Ascending aorta (tissue), 2 donors: ENCODE measurements at regions of chr6 and their contacts with region 1.

Region 1: GRCh38 chr6:169162752-169163591 is 90.7 kb downstream of the THBS2 start:
- DNase-seq: peak; percentile 65 to 94
- H3K4me3 ChIP-seq: peak overlapping the region; percentile 1 to 4
- H3K27ac ChIP-seq: peak overlapping the region; percentile 84 to 87
- H3K4me1 ChIP-seq: peaks cover 15 to 46% of the 10 kb centered on the region in 2 donors
- H3K27me3 ChIP-seq: no peaks in the 10 kb centered on the region
- CTCF ChIP-seq: no peak

Region 2: DNA sequence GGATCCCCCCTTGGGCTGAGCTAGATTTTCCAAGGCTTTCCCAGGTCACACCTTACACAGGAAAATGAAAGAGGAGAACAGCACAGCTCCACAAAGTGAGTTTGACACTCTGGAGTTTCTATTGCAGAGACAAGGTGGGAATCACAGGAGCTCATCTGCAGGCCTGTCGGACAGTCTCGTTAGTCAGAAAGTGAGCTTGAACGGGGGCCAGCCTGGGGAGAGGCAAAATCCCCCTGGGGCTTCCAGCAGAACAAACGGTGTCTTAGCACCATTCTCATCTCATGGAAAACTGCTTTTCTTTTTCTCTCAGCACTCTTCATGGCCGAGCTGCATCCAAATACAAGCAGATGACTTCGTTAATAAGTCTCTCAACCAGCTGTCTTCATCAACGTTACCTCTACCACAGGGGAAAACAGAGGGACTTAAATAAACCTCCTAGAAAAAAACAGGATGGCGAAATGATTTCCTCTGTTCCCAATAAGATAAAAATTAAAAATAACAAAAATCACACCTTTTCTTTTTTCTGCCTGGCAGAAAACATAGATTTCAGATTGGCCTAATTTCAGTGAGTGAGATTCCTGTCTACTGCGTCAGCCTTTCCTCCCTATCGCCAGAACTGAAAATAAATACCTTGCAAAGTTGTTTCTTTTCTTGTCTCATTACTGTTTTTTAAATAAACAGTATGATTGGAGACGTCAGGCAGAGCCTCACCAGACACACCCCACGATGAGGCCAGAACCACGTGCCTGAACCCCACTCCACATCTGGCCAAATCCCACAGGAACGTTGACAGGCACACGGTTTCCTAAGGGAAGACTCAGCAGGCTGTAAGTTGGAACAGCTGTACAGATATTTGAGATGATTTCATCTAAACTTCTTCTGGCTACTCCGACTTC is 1619.1 kb before region 1 on chr6:
- intact Hi-C with region 1: loop called (anchors 10 kb)
- DNase-seq: peak in 1 of 2 donors; percentile 77
- H3K4me3 ChIP-seq: no peak overlapping the region
- H3K27ac ChIP-seq: peak overlapping the region; percentile 81 to 85
- H3K4me1 ChIP-seq: peaks cover 10 to 24% of the 10 kb centered on the region in 2 donors
- H3K27me3 ChIP-seq: no peaks in the 10 kb centered on the region
- CTCF ChIP-seq: no peak

Region 3: DNA sequence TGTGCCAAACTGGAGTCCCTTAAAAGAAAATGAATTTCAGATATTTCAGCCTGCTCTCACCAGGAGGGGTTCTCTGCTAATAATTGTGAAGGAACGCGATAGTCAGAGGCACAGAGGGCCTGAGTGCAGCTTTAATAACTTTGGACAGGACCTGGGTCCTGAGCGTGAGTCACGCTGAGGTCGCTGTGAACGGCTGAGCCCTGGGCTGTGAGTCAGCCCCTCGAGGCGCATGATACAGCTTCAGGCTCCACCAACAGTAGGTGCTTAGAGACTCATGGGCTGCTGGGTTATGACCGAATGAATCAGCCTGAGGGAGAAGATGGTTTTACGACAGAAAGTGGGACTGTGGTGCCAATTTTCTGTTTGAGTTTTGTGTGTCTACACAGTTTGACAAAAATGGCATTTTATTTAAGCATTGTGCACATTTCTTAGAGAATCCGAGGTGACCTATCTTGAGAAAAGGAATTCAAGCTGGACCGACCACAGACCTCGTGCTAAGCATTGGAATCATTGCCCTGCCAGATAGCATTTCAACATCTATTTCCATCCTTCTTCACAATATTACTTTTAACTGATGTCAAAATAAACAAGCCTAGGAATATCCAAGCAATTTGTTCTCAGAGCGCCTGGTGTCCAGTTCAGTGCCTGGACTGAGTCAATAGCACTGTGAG is 92.3 kb before region 1 on chr6:
- intact Hi-C with region 1: loop called (anchors 2 kb)
- DNase-seq: peak; percentile 91 to 97
- H3K4me3 ChIP-seq: no peak overlapping the region
- H3K27ac ChIP-seq: peak overlapping the region; percentile 71 to 72
- H3K4me1 ChIP-seq: peaks cover 0 to 41% of the 10 kb centered on the region in 2 donors
- H3K27me3 ChIP-seq: no peaks in the 10 kb centered on the region
- CTCF ChIP-seq: no peak